HEK293T (cell line): ENCODE measurements at regions of chr6 and their contacts with region 1.

Region 1: GRCh38 chr6:18835976-18836375 is 448.8 kb downstream of the RNF144B start:
- DNase-seq: no peak

Region 2: DNA sequence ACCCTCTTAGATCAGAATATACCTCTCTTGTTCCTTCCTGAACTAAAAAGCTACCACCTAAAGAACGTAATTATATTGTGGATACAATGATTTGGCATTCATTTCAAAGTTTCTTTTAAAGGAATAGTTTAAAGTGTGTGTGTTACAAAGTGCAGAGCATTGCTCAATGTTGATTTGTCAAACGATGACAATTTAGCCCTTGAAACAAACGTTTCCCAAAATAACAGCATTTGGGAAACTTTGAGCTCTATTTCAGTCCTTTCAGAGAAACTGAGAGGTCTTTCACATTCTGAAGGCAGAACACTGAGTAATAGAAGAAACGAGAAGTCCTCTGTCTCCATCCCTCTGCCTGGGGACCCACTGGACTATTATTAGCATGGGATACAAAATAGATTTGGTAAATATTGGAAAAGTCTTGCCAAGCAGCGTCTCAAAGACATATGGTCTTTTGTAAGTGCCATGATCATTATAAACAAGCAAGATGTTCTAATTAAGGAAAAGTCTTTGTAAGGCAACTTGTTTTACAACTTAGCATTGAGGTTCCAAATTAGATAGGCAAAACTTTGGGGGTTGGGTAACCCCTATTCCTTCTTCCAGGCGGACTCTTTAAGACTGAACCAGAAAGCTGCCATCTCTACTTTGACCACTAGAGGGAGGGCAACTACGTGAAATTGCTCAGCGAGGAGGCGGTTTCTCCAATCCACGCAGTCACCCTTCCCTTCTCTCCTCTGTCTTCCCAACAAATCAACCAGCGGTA is 240.0 kb before region 1 on chr6:
- CTCF ChIA-PET with region 1: no interaction called
- POLR2A ChIA-PET with region 1: no interaction called
- DNase-seq: peak; percentile 63

Region 3: DNA sequence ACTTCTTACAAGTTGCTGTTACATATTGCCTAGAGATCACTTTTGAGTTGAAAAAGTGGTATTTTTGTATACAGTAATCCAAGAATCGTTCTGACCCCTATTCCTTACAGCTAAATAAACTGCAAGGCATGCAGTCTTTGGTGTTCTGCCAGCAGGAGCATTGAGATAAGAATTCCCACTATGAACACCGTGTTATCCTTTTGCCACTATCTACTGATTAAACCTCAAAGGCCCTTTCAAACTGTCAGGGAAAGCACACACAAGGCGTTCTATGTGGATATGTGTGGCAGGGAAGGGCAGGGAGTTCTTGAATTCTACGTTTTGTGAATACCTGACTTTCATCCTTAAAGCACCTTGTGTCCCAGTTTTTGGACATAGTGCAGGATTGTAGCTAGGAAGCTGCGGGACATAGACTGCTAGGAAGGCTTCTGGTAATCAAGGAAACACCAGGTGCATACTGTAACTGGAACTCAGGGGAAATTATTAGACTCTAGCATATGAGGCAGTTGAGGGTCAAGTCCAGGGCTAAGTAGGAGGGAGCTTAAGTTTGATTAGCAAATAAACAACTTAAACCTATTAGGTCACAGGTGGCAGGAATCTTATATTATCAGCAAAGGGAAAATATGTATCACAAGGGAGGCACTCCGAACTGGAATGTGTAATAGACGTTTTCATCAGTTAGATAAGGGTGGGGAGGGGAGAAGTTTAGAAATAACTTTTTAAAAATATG is 57.7 kb after region 1 on chr6:
- CTCF ChIA-PET with region 1: no interaction called
- POLR2A ChIA-PET with region 1: no interaction called
- DNase-seq: no peak

Region 4: DNA sequence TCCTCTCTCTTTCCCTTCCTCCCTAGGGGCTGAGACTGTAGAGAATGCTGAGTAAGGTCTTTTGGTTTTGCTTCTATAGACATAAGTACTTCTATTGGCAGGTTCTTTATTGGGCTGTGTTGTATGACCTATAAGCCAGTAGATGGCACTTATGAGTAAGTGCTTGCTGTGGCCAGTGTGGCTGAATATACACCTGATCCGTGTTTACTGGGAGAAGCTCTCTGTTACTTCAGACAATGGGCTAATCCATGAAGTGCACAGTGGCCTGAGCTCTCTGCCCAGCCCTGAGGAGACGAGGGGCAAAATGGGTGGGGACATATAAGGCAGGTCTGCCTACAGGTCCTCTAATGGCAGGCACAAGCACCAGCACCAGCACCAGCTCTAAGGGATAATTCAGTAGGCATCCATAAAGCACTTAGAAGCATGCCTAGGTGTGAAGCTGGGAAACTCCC is 161.4 kb after region 1 on chr6:
- CTCF ChIA-PET with region 1: interaction called, 10 read pairs
- POLR2A ChIA-PET with region 1: no interaction called
- DNase-seq: peak; percentile 50